ENCODE measurements at regions of chr1 and their contacts with region 1.

Region 1: DNA sequence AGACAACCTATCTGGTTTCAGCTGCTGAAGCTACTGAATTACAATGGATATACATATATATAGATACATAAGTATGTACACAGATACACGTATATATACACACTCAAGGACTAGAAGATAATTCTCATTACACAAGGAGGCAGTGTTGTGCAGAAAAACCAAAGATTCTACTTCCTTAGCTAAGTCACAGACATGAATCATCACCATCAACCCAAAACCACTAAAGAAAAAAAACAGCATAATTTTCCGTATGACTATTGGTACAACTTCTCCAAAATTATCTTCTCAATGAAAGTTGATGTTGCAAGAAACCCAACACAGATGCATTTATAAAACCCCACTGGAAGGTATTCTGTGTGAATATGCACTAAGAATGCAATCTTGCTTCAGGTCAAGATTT is 36.8 kb upstream of the RPF1 start:
- DNase-seq: no peak
- ATAC-seq: peak; percentile 63

Region 2: DNA sequence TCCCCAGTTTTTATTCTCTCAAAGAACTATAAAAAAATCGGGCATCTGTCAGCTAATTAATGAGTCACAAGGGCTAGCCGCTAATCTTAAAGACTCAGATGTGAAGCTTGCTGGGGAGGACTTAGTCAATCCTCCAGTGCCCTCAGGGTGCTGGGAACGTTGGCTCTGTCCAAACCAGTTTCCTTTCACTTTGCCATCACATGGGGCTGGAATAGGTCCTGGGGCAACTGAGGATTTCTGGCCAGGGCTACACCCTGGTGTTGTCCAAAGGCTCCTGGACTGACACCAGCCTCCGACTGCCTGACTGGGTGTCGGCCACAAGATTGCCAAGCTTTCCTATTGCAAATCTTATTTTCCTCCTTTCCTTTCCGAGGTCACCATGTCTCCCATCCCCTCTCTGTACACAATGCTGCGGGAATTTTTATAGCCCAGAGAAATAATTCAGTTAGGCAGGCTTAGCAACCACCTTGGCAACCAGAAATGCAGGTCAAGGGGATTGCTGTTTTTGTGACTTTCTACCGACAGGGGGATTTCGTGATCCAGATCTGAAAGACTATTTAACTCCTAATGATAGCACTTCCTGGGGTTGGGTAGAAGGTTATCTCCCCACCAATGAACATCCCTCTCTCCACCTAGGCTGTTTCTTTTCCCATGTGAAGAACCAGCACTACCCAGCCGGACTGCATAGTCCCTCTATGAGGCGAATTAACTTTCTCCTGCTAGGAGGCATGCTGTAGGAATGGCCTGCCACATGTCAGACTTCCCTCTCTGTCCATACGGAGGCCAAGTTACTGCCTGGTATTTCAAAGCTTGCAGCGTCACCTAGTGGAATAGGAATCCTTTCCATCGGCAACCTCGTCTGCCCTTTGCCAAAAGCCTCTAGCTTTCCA is 161.9 kb after region 1 on chr1:
- intact Hi-C with region 1: loop called (anchors 5 kb)
- DNase-seq: no peak
- ATAC-seq: peak; percentile 83

Region 3: DNA sequence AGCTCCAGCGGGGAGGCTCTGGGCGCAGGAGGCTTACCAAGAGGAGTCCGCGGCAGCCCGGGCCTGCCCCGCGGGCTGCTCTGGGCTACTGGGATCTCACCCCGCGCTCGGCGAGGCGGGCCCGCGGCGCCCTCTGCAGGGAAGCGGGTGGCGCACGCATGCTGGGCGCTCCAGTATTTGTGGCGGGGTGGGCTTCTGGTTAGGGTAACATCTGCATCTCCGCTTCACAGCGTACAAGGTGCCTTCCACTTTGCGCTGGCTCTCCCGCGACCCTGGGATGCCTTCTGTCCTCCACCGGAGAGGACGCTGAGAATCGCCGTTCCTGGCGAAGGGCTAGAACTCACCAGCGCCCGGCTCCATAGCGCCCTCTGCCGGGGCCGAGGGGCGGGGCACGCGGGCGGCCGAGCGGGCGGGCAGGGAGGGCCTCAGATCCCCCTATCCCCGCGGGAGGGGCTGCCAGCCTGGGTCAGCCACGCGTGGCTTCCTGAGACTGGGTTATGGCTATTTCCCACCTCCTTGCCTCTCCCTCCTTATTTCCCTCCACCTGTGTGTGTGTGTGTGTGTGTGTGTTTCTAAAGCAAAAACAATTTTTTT is 178.6 kb after region 1 on chr1:
- intact Hi-C with region 1: loop called (anchors 5 kb)
- DNase-seq: peak; percentile 90
- ATAC-seq: peak; percentile 95

Region 4: GRCh38 chr1:84758968-84759491 is 316.8 kb after region 1 on chr1:
- intact Hi-C with region 1: loop called (anchors 5 kb)
- DNase-seq: no peak
- ATAC-seq: peak; percentile 65